ENCODE measurements at regions of chr1 and their contacts with region 1.

Region 1: DNA sequence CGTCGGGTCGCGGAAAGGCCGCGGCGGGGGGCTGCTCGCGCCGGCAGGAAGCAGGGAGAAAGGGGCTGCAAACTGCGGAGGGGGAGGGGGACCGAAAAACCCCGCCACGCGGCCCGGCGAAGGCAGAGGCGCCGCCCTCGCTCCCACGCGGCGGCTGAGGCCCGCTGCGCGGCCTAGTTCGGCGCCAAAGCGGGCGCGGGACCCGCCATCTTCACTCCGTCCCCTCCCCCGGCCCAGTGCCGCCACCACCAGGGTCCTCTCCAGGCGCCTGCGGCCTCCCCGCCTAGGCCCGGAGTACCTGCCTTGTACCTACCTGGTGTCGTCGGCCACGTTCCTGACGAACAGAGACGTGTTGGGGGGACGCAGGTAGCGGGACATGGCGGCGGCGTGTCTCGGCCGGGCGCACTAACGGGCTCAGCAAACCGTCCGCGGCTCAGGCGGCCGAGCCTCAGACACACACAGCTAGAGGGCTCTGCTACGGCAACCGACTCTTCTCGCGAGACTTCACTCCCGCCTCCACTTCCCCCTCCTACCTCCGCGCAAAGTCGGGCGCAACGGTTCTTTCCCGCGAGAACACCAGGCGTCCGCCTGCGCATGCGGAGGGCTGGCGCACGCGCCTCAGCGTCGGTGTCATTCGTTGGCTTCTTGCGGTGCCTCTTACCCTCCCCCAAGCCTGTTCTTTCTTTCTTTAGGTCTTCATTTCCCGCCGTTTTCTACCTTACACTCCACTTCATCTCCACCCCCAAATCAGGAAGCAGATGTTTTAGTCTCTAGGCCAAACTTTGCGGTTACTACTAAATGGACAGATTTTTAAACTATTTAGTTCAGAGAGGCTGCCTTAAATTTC is at the start of gene SRSF10:
- DNase-seq: peak; percentile 98 to 99 (median 99)
- ATAC-seq: peak; percentile 99
- H3K4me3 ChIP-seq: peak within 1 kb of the TSS; percentile 88
- H3K27ac ChIP-seq: peak within 1 kb of the TSS; percentile 100
- H3K4me1 ChIP-seq: peaks cover 6% of the 10 kb centered on the region
- H3K27me3 ChIP-seq: no peaks in the 10 kb centered on the region
- total RNA-seq, gene SRSF10: 49.8 to 59.0 (median 53.0) TPM

Region 2: DNA sequence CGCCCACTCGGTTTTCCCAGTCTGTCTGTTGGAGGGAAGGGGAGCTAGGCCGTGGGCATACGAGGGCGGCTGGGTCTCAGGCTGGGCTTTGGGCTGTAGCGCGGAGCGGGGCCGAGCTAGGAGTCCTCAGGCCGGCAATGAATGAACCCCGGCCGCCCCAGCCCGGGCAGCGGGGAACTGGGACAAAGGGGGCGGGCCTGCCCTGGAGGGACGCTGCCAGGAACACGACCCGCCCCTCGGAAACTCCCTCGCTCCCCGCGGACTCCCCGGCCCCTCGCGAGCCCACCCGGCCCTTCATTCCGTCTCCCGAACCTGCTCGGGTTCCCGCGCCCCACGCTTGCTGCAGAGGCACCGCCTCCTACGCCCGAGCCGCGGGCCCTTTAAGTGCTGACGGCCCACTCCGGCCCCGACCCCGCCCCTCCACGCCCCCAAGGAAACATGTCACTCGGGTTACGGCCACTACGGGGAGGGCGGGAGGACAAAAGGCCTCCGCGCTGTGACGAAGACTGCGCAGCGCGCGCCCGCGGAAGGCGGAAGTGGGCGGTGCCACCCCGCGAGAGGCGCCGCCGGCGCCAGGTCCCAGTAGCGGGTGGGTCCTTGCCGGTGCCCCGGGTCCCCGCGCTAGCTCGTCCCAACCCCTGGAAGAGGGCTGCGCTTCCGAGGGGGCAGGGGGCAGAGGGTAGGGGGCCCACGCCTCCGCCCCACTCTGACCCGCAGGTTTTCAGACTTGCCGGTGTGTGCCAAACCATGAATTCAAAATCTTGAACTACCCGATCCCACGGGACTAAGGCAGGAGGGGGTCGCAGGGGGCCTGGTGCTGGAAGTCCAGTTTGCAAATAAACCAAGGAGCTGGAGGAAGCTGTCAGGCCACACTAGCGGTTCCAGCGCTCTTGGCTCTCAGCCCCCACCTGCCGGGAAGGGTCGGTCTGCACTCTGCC is 179.4 kb before region 1 on chr1 and contains the start of gene GALE:
- intact Hi-C with region 1: no loop called
- DNase-seq: peak; percentile 98 to 99 (median 99)
- ATAC-seq: peak; percentile 95 to 96
- H3K4me3 ChIP-seq: peak within 1 kb of the TSS; percentile 81
- H3K27ac ChIP-seq: peak within 1 kb of the TSS; percentile 43
- H3K4me1 ChIP-seq: peaks cover 3% of the 10 kb centered on the region
- H3K27me3 ChIP-seq: no peaks in the 10 kb centered on the region
- total RNA-seq, gene GALE: 6.1 to 11.0 (median 6.7) TPM

Region 3: GRCh38 chr1:23875382-23875781 is 104.7 kb before region 1 on chr1:
- intact Hi-C with region 1: no loop called
- DNase-seq: no peak
- ATAC-seq: no peak
- H3K4me3 ChIP-seq: no peak overlapping the region
- H3K27ac ChIP-seq: no peak overlapping the region
- H3K4me1 ChIP-seq: no peaks in the 10 kb centered on the region
- H3K27me3 ChIP-seq: no peaks in the 10 kb centered on the region

Region 4: GRCh38 chr1:23916209-23917131 is 63.6 kb before region 1 on chr1:
- intact Hi-C with region 1: no loop called
- DNase-seq: peak; percentile 57 to 79 (median 72)
- ATAC-seq: peak; percentile 82 to 86
- H3K4me3 ChIP-seq: no peak overlapping the region
- H3K27ac ChIP-seq: no peak overlapping the region
- H3K4me1 ChIP-seq: no peaks in the 10 kb centered on the region
- H3K27me3 ChIP-seq: no peaks in the 10 kb centered on the region

Region 5: DNA sequence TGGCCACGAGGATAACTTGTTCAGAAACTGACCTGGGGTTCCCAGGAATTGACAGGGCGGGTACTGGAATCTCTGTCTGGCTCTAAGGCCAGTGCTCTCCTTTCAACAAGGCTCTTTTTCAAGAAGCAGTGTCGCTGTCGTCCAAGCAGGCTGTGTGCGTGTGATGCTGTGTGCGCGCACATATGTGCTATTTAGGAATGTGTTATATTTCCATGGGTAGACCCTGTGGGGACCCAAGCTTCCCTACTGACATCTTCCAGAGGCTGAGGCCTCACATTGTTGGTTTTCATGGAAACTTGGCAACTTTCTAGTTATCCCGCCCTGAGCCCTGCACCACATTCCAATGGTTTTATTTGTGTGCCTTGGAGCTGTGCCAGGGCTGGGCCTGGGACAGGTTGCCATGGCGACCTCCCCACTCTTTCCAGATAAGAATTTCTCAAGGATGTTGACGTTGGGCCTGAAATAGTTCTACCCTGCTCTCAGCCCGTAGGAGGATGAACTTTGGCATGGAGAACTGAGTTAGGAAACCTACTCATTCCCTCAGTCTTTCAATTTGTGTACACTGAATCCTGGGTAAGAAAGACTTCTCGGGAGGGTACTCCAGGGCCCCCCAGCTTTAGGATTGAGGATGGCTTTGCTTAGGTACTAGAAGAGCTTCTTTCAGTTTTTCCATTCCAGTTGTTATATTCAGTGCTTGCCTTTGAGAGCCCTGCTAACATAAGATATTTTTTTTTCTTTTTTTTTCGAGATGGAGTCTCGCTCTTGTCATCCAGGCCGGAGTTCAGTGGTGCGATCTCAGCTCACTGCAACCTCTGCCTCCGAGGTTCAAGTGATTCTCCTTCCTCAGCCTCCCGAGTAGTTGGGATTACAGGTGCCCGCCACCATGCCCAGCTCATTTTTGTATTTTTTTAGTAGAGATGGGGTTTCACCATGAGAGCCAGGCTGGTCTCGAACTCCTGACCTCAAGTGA is 38.8 kb after region 1 on chr1:
- intact Hi-C with region 1: loop called in 3 of 4 experiments (anchors 2 to 10 kb)
- DNase-seq: peak; percentile 97 to 99 (median 98)
- ATAC-seq: peak; percentile 93 to 94
- H3K4me3 ChIP-seq: no peak overlapping the region
- H3K27ac ChIP-seq: peak overlapping the region; percentile 93
- H3K4me1 ChIP-seq: peaks cover 10% of the 10 kb centered on the region
- H3K27me3 ChIP-seq: no peaks in the 10 kb centered on the region

Region 6: DNA sequence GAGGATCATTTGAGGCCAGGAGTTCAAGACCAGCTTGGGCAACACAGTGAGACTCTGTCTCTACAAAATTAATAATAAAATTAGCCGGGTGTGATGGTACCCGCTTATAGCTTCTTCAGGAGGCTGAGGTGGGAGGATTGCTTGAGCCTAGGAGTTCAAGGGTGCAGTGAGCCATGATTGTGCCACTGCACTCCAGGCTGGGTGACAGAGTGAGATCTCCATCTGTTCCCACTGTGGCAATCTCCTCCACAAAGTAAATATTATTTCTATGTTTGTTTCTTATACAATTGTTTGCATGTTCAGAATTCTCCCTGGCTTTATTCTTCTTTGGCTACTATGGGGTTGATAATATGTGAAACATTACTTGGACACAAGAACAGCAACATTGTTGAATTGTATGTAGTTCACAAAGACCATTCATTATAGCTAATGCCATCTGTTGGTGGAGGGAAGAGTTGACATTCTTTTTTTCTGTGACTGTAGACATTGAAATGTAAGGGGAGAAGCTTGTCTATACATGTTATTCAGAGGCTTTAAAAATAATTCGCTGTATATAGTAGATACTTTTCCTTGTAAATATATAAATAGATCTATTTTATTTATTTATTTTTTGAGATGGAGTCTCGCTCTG is 47.9 kb after region 1 on chr1:
- intact Hi-C with region 1: loop called in 1 of 4 experiments (anchors 10 kb)
- DNase-seq: no peak
- ATAC-seq: peak; percentile 65 to 75
- H3K4me3 ChIP-seq: no peak overlapping the region
- H3K27ac ChIP-seq: no peak overlapping the region
- H3K4me1 ChIP-seq: no peaks in the 10 kb centered on the region
- H3K27me3 ChIP-seq: no peaks in the 10 kb centered on the region